ENCODE measurements at regions of chr2 and their contacts with region 1.

Region 1: GRCh38 chr2:12543978-12544558 is 172.7 kb upstream of the TRIB2 start:
- DNase-seq: no peak
- ATAC-seq: peak; percentile 72
- H3K4me3 Mint-ChIP-seq: peak overlapping the region; percentile 42
- H3K27ac Mint-ChIP-seq: peak overlapping the region; percentile 84
- H3K4me1 Mint-ChIP-seq: peaks cover 39% of the 10 kb centered on the region
- H3K27me3 Mint-ChIP-seq: no peaks in the 10 kb centered on the region
- CTCF ChIP-seq: no peak

Region 2: GRCh38 chr2:12560618-12561017 is 16.6 kb after region 1 on chr2:
- CTCF ChIA-PET with region 1: no interaction called
- POLR2A ChIA-PET with region 1: interaction called, 11 read pairs
- intact Hi-C with region 1: no loop called
- DNase-seq: no peak
- ATAC-seq: peak; percentile 62
- H3K4me3 Mint-ChIP-seq: peak overlapping the region; percentile 19
- H3K27ac Mint-ChIP-seq: peak overlapping the region; percentile 25
- H3K4me1 Mint-ChIP-seq: peaks cover 27% of the 10 kb centered on the region
- H3K27me3 Mint-ChIP-seq: peaks cover 3% of the 10 kb centered on the region
- CTCF ChIP-seq: no peak